ENCODE measurements at regions of chr10 and their contacts with region 1.

Region 1: GRCh38 chr10:62610649-62611229 is 193.8 kb upstream of the ADO start:
- DNase-seq: peak; percentile 77
- ATAC-seq: peak; percentile 90
- H3K4me3 Mint-ChIP-seq: no peak overlapping the region
- H3K27ac Mint-ChIP-seq: no peak overlapping the region
- H3K4me1 Mint-ChIP-seq: peaks cover 10% of the 10 kb centered on the region
- H3K27me3 Mint-ChIP-seq: no peaks in the 10 kb centered on the region

Region 2: DNA sequence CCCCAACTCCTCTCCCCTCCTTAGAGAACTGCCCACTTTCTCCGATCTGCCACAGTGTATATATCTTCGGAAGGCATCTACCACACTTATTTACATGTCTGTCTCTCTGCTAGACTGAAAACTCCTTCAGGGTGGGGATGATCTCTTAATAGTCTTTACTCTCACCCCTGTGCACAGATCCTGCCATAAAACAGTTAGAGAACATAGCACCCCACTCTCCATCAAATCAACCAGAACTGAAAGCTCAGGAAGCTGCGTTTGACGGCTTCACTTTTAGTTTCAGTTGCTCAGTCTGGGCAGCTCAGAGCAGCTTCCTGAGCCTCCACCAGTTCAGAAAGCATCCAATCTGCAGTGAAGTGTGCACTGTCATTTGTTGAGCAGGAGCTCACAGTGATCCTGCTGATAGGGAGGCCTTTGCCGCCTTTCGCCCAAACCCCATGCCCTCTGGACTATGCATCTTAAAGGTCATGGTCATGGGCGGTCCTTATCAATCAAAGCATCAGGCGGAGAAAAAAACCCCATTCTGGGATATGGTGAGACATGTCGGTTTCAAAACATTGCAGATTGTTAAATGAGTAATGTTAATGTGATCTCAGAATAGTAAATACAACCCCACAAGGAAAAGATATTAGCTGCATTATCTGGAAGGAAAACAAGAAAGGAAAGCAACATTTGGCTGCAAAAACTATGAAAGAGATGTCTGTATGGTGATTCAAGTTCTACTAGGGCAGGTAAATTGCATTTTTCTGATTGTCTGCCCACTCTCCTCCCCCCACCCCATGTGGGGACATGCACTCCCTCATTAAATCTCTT is 26.7 kb after region 1 on chr10:
- CTCF ChIA-PET with region 1: interaction called, 16 read pairs
- POLR2A ChIA-PET with region 1: interaction called, 3 read pairs
- DNase-seq: peak; percentile 82
- ATAC-seq: peak; percentile 96
- H3K4me3 Mint-ChIP-seq: no peak overlapping the region
- H3K27ac Mint-ChIP-seq: no peak overlapping the region
- H3K4me1 Mint-ChIP-seq: peaks cover 16% of the 10 kb centered on the region
- H3K27me3 Mint-ChIP-seq: no peaks in the 10 kb centered on the region

Region 3: GRCh38 chr10:62732841-62733653 is 122.3 kb after region 1 on chr10:
- CTCF ChIA-PET with region 1: interaction called, 15 read pairs
- POLR2A ChIA-PET with region 1: interaction called, 3 read pairs
- DNase-seq: peak; percentile 80
- ATAC-seq: peak; percentile 89
- H3K4me3 Mint-ChIP-seq: no peak overlapping the region
- H3K27ac Mint-ChIP-seq: no peak overlapping the region
- H3K4me1 Mint-ChIP-seq: peaks cover 16% of the 10 kb centered on the region
- H3K27me3 Mint-ChIP-seq: peaks cover 5% of the 10 kb centered on the region

Region 4: DNA sequence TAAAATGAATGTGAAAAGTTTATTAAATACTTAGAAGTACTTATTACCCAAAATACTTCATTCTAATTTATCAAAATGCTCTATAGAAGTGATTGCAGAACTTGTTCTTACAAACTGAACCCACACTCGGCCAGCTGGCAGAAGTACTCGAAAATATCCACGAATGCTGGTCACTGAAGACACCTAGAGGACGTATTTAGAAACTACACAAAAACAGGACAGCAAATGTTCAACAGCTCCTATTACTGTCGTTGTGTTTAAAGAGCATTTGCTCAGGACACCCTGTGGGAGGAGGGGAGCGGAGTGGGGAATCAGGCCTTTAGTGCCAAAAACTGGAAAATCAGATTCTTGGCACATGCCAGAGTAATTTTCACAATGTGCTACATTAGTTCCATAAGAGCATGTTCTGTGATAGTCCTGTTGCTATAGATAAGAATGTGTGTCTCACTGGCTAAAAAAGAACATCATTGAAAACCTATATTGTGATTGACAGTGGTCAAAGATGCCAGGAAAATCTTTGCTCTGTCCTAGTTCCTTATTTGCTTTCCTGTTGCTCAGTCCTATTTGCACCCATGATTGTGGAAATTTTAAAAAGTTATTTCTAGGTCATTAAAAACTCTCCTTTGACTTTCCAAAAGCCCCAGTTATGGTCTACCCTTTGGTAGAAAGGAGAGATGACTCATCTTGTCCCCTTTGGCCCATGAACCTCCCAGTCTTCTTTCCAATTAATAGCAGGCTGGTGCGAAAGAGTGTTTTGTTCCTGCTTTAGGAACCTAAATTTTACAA is 473.4 kb after region 1 on chr10:
- CTCF ChIA-PET with region 1: interaction called, 26 read pairs
- POLR2A ChIA-PET with region 1: no interaction called
- DNase-seq: peak; percentile 48
- ATAC-seq: peak; percentile 74
- H3K4me3 Mint-ChIP-seq: no peak overlapping the region
- H3K27ac Mint-ChIP-seq: no peak overlapping the region
- H3K4me1 Mint-ChIP-seq: no peaks in the 10 kb centered on the region
- H3K27me3 Mint-ChIP-seq: peaks cover 12% of the 10 kb centered on the region